ENCODE measurements at regions of chr9 and their contacts with region 1.

Region 1: DNA sequence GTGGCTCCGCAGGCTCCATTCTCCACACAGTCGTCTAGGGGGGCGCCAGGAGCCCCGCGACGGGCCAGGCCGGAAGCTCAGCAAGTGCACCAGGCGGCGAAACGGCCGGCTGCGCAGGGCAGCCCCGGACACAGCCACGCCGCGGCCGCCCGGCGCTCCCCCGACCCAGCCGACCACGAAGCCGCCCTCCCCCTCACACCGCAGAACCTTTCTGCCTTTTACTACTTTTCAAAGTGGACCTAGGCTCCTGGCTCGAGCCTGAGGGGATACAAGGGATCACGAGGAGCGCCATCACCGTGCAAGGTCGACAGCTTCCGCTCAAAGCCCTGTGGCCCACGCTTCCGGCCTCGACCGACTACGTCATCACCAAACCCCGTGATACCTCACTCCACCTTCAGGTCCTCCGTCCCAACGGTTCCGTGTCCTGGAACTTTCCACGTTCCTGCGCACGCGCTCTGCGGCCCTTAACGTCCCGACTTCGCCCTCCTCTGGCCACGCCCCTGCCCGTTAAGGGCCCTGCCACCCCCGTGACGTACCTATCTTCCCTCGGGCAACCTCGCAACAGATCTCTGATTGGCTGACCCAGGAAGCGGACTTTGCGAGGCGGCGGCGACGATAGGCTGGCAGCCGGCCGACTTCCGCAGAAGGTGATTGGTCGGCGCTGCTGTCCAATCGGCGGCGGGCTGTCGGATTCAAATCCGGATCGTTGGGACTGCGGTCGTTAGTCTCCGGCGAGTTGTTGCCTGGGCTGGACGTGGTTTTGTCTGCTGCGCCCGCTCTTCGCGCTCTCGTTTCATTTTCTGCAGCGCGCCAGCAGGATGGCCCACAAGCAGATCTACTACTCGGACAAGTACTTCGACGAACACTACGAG is at the start of gene CKS2:
- DNase-seq: peak; percentile 99 to 100
- H3K4me3 ChIP-seq: peak within 1 kb of the TSS; percentile 91 to 100 (median 98)
- H3K27ac ChIP-seq: peak within 1 kb of the TSS; percentile 96
- H3K4me1 ChIP-seq: peaks cover 0 to 7% (median 4%) of the 10 kb centered on the region in 4 experiments; a peak in 5 of 7 replicates
- H3K27me3 ChIP-seq: no peaks in the 10 kb centered on the region
- CTCF ChIP-seq: no peak; a peak in 1 of 4 replicates
- EP300 ChIP-seq: no peak
- POLR2A ChIP-seq: peak; percentile 98 to 99
- RAD21 ChIP-seq: 0 out of 4 replicates have a peak, but pooled peaks of 1 of the 2 experiments have one; percentile 5
- total RNA-seq, gene CKS2: 320 and 337 TPM in 2 replicates

Region 2: GRCh38 chr9:89179895-89180667 is 130.6 kb before region 1 on chr9:
- CTCF ChIA-PET with region 1: no interaction called
- POLR2A ChIA-PET with region 1: interaction called, 11 read pairs
- DNase-seq: peak; percentile 75 to 81
- H3K4me3 ChIP-seq: peak overlapping the region; percentile 42 to 71 (median 44)
- H3K27ac ChIP-seq: no peak overlapping the region; the same call in 1 of the 2 replicates
- H3K4me1 ChIP-seq: peaks cover 4 to 21% (median 11%) of the 10 kb centered on the region in 4 experiments; a peak in 6 of 7 replicates
- H3K27me3 ChIP-seq: peaks cover 0 to 36% (median 20%) of the 10 kb centered on the region in 4 experiments; a peak in 5 of 7 replicates
- CTCF ChIP-seq: no peak
- EP300 ChIP-seq: no peak
- POLR2A ChIP-seq: peak; percentile 48 to 79
- RAD21 ChIP-seq: no peak

Region 3: DNA sequence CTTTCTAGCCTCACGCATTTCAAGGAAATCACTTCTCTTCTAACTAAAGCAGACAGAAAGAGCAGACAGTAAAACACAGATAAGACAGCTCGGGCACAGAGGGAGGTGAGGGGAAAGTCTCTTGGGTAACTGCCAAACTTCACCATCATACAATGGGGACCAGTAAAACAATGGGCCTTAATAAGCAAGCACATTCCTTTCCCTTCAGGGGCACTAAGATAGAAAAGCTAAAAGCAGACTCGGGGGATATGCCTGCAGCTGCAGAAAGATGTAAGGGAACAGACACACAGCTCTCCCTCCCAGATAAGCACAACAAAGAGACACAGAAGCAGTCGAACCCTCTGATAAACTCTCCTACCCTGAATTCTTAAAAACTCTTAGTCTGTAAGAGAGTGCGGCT is 15.3 kb before region 1 on chr9:
- CTCF ChIA-PET with region 1: no interaction called
- POLR2A ChIA-PET with region 1: interaction called, 13 read pairs
- DNase-seq: no peak
- H3K4me3 ChIP-seq: peak overlapping the region in 1 of 4 experiments; percentile 20; a peak in 1 of 8 replicates
- H3K27ac ChIP-seq: no peak overlapping the region
- H3K4me1 ChIP-seq: no peaks in the 10 kb centered on the region; a peak in 2 of 7 replicates
- H3K27me3 ChIP-seq: no peaks in the 10 kb centered on the region
- CTCF ChIP-seq: no peak
- EP300 ChIP-seq: no peak
- POLR2A ChIP-seq: no peak
- RAD21 ChIP-seq: no peak

Region 4: GRCh38 chr9:89323390-89323789 is 12.7 kb after region 1 on chr9:
- CTCF ChIA-PET with region 1: no interaction called
- POLR2A ChIA-PET with region 1: interaction called, 33 read pairs
- DNase-seq: no peak
- H3K4me3 ChIP-seq: no peak overlapping the region
- H3K27ac ChIP-seq: no peak overlapping the region
- H3K4me1 ChIP-seq: peaks cover 0 to 3% (median 0%) of the 10 kb centered on the region in 4 experiments; a peak in 2 of 7 replicates
- H3K27me3 ChIP-seq: no peaks in the 10 kb centered on the region
- CTCF ChIP-seq: no peak
- EP300 ChIP-seq: no peak
- POLR2A ChIP-seq: no peak
- RAD21 ChIP-seq: no peak